GM12878 (cell line): ENCODE measurements at regions of chr1 and their contacts with region 1.

Region 1: GRCh38 chr1:244319283-244320132 is 132.2 kb downstream of the ADSS2 start:
- DNase-seq: peak; percentile 84
- ATAC-seq: peak; percentile 85
- H3K4me3 ChIP-seq: peak overlapping the region; percentile 20; the same call in 1 of the 2 replicates
- H3K27ac ChIP-seq: peak overlapping the region; percentile 94
- H3K4me1 ChIP-seq: peaks cover 24% of the 10 kb centered on the region
- H3K27me3 ChIP-seq: no peaks in the 10 kb centered on the region
- CTCF ChIP-seq: no peak
- EP300 ChIP-seq: peak; percentile 59 to 62; a peak in 2 of 4 replicates
- POLR2A ChIP-seq: no peak
- RAD21 ChIP-seq: no peak

Region 2: GRCh38 chr1:244092293-244092963 is 227.1 kb before region 1 on chr1:
- CTCF ChIA-PET with region 1: no interaction called
- POLR2A ChIA-PET with region 1: no interaction called
- RAD21 ChIA-PET with region 1: no interaction called
- SMC1A ChIA-PET with region 1: no interaction called
- in situ Hi-C with region 1: no loop called
- intact Hi-C with region 1: no loop called
- DNase-seq: no peak
- ATAC-seq: no peak
- H3K4me3 ChIP-seq: no peak overlapping the region
- H3K27ac ChIP-seq: no peak overlapping the region
- H3K4me1 ChIP-seq: no peaks in the 10 kb centered on the region
- H3K27me3 ChIP-seq: no peaks in the 10 kb centered on the region; a peak in 1 of 4 replicates
- CTCF ChIP-seq: no peak
- EP300 ChIP-seq: no peak
- POLR2A ChIP-seq: no peak
- RAD21 ChIP-seq: no peak

Region 3: GRCh38 chr1:244163861-244164562 is 155.5 kb before region 1 on chr1:
- CTCF ChIA-PET with region 1: no interaction called
- POLR2A ChIA-PET with region 1: no interaction called
- RAD21 ChIA-PET with region 1: no interaction called
- SMC1A ChIA-PET with region 1: no interaction called
- in situ Hi-C with region 1: no loop called
- intact Hi-C with region 1: no loop called
- DNase-seq: no peak
- ATAC-seq: no peak
- H3K4me3 ChIP-seq: no peak overlapping the region
- H3K27ac ChIP-seq: no peak overlapping the region
- H3K4me1 ChIP-seq: no peaks in the 10 kb centered on the region
- H3K27me3 ChIP-seq: no peaks in the 10 kb centered on the region; a peak in 1 of 4 replicates
- CTCF ChIP-seq: no peak
- EP300 ChIP-seq: no peak
- POLR2A ChIP-seq: no peak
- RAD21 ChIP-seq: no peak

Region 4: DNA sequence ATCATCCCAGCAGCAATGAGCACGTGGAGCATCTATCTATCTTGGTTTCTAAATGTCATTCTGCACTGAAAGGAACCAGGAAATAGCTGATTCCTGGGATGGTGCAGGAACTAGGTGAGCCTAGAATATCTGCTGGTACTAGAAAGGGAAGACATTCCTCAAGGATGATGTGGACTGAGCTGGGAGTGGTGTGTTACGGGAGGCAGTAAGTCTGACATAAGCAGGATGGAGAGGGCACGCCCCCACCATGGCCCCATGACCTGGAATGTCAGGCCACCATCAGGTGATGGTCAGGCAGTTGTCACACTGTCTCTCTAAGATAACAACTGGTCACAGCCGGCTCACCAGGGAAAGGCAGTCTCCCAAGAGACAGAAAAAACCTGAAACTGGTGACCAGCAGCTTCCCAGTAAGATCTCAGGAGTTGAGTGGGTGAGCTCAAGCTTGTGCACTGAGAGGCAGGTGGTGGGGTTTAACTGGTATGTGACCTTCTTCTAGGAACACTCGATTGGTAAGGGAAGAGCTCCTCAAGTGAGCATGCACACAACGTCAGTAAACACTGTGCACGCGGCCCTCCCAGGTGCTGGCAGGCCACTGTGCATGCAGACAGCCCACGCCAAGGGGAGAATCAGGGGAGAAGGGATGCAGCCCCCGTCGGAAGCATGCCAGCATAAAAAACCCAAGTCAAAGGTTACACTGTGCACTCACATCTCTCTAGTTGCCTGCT is 16.5 kb before region 1 on chr1:
- CTCF ChIA-PET with region 1: interaction called, 10 read pairs
- POLR2A ChIA-PET with region 1: interaction called, 4 read pairs
- RAD21 ChIA-PET with region 1: interaction called, 7 read pairs
- SMC1A ChIA-PET with region 1: interaction called, 4 read pairs
- in situ Hi-C with region 1: no loop called
- intact Hi-C with region 1: loop called (anchors 1 kb)
- DNase-seq: no peak
- ATAC-seq: no peak
- H3K4me3 ChIP-seq: no peak overlapping the region
- H3K27ac ChIP-seq: no peak overlapping the region
- H3K4me1 ChIP-seq: peaks cover 3% of the 10 kb centered on the region
- H3K27me3 ChIP-seq: no peaks in the 10 kb centered on the region
- CTCF ChIP-seq: no peak
- EP300 ChIP-seq: no peak
- POLR2A ChIP-seq: no peak
- RAD21 ChIP-seq: no peak

Region 5: GRCh38 chr1:244353551-244354091 is 34.1 kb after region 1 on chr1:
- CTCF ChIA-PET with region 1: no interaction called
- POLR2A ChIA-PET with region 1: interaction called, 7 read pairs
- RAD21 ChIA-PET with region 1: interaction called, 3 read pairs
- SMC1A ChIA-PET with region 1: no interaction called
- in situ Hi-C with region 1: no loop called
- intact Hi-C with region 1: loop called (anchors 2 kb)
- DNase-seq: no peak
- ATAC-seq: peak; percentile 45
- H3K4me3 ChIP-seq: no peak overlapping the region
- H3K27ac ChIP-seq: peak overlapping the region; percentile 37; the same call in 1 of the 2 replicates
- H3K4me1 ChIP-seq: peaks cover 25% of the 10 kb centered on the region
- H3K27me3 ChIP-seq: no peaks in the 10 kb centered on the region
- CTCF ChIP-seq: no peak
- EP300 ChIP-seq: no peak
- POLR2A ChIP-seq: no peak
- RAD21 ChIP-seq: no peak

Region 6: GRCh38 chr1:244409701-244410100 is 90.2 kb after region 1 on chr1:
- CTCF ChIA-PET with region 1: no interaction called
- POLR2A ChIA-PET with region 1: no interaction called
- RAD21 ChIA-PET with region 1: no interaction called
- SMC1A ChIA-PET with region 1: no interaction called
- in situ Hi-C with region 1: no loop called
- intact Hi-C with region 1: loop called (anchors 5 kb)
- DNase-seq: peak; percentile 55
- ATAC-seq: peak; percentile 91
- H3K4me3 ChIP-seq: peak overlapping the region; percentile 46; the same call in 1 of the 2 replicates
- H3K27ac ChIP-seq: peak overlapping the region; percentile 38; the same call in 1 of the 2 replicates
- H3K4me1 ChIP-seq: peaks cover 21% of the 10 kb centered on the region
- H3K27me3 ChIP-seq: no peaks in the 10 kb centered on the region
- CTCF ChIP-seq: no peak
- EP300 ChIP-seq: no peak; a peak in 1 of 4 replicates
- POLR2A ChIP-seq: no peak
- RAD21 ChIP-seq: no peak